ENCODE measurements at regions of chr1 and their contacts with region 1.

Region 1: DNA sequence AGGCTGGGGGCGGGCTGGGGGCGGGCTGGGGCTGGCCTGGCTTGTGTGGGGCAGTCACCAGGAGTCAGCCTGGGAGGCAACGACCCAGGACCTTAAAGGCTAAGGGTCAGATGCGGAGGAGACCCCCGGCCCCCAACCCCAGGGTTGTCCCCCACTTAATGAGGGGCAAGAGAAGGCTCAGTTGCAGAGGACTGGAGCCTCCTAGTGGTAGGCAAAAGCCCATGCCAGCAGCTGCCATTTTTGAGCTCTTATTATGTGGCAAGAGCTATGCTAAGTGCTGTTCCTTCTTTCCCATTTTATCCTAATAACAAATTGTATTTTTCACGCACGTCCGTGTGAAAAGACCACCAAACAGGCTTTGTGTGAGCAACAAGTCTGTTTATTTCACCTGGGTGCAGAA is 8.0 kb downstream of the KIAA1614 start:
- DNase-seq: no peak
- ATAC-seq: peak; percentile 38; the same call in 1 of the 3 replicates
- H3K4me3 ChIP-seq: no peak overlapping the region
- H3K27ac ChIP-seq: no peak overlapping the region
- H3K4me1 ChIP-seq: peaks cover 9% of the 10 kb centered on the region
- H3K27me3 ChIP-seq: peaks cover 0 to 3% of the 10 kb centered on the region in 2 experiments; a peak in 1 of 4 replicates
- CTCF ChIP-seq: peak; percentile 41 to 57 (median 48)
- EP300 ChIP-seq: no peak
- POLR2A ChIP-seq: no peak
- RAD21 ChIP-seq: peak; percentile 33; the same call in 1 of the 2 replicates

Region 2: DNA sequence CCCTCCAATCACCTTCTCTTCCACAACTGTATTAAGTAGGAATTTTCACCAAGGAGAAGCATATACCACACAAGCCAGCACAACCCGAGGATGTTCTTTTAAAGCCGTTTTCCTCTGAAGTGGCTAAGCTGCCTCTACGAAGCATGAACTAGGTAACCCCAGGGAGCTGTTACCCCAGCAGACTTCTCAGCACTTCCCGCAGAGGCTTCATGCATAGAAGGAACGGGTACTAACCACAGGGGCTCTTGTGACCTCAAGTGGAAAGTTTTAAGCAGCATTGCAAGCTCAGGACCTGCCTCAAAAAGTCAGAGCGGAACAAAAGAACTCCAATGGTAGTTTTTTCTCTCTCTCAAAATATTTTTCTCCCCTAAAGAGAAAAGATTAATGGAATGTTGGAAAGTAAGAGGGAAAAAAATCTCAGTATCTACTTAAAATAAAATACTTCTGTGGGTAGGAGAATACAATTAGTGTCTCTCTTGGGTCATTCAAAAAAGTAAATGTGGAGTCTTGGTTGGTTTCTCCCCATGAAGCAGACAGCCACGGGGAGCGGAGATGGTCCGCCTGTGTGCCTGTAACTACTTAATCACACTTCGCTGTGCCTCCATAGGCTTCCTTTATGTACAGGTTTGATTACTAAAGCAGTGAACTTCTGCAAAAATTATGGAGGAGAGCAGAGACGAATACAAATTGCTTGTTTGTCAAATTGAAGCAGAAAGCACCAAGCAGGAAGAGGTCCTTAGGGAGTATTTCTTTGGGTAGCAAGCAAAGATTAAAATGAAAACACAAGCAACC is 61.1 kb after region 1 on chr1:
- CTCF ChIA-PET with region 1: interaction called, 3 read pairs
- POLR2A ChIA-PET with region 1: no interaction called
- RAD21 ChIA-PET with region 1: interaction called, 15 read pairs
- SMC1A ChIA-PET with region 1: interaction called, 3 read pairs
- in situ Hi-C with region 1: no loop called
- intact Hi-C with region 1: no loop called
- DNase-seq: peak; percentile 47
- ATAC-seq: peak; percentile 91
- H3K4me3 ChIP-seq: peak overlapping the region; percentile 19; the same call in 1 of the 2 replicates
- H3K27ac ChIP-seq: peak overlapping the region; percentile 65
- H3K4me1 ChIP-seq: peaks cover 8% of the 10 kb centered on the region; the same call in 1 of the 2 replicates
- H3K27me3 ChIP-seq: no peaks in the 10 kb centered on the region
- CTCF ChIP-seq: peak in 1 of 3 experiments; percentile 22; a peak in 1 of 6 replicates
- EP300 ChIP-seq: no peak
- POLR2A ChIP-seq: no peak
- RAD21 ChIP-seq: peak; percentile 32; the same call in 1 of the 2 replicates

Measured in GM12878 (cell line).